ENCODE measurements at regions of chr20 and their contacts with region 1.

Region 1: GRCh38 chr20:34522969-34523871 is 7.0 kb downstream of the DYNLRB1 start:
- DNase-seq: peak; percentile 83
- ATAC-seq: peak; percentile 83
- H3K4me3 ChIP-seq: no peak overlapping the region
- H3K27ac ChIP-seq: peak overlapping the region; percentile 19
- H3K4me1 ChIP-seq: peaks cover 67% of the 10 kb centered on the region
- H3K27me3 ChIP-seq: no peaks in the 10 kb centered on the region
- CTCF ChIP-seq: peak; percentile 99
- EP300 ChIP-seq: no peak
- POLR2A ChIP-seq: no peak
- RAD21 ChIP-seq: peak; percentile 97

Region 2: DNA sequence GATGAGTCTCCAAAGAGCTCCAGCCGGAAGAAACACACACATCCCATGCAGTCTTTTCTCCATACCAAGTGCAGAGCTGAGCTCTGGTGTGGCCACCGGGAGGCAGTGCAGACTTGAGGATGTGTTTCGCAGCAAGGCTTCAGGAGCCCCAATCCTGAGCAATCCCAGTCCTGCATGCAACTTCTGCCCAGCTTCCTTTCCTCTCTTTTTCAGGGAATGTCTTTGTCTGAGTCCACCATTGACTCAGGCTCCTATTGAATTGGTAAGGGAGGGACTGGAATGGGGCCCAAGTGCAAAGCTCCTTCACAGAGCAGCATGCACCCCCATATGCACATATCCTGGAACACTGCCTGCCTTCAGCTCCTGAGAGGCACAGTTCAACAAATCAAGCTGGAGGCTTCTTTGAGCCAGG is 332.5 kb before region 1 on chr20:
- CTCF ChIA-PET with region 1: interaction called, 4 read pairs
- POLR2A ChIA-PET with region 1: no interaction called
- in situ Hi-C with region 1: no loop called
- intact Hi-C with region 1: loop called (anchors 1 kb)
- DNase-seq: peak; percentile 81
- ATAC-seq: peak; percentile 99
- H3K4me3 ChIP-seq: no peak overlapping the region
- H3K27ac ChIP-seq: no peak overlapping the region
- H3K4me1 ChIP-seq: no peaks in the 10 kb centered on the region
- H3K27me3 ChIP-seq: peaks cover 5 to 56% of the 10 kb centered on the region in 2 experiments; a peak in 4 of 5 replicates
- CTCF ChIP-seq: peak; percentile 98
- EP300 ChIP-seq: no peak
- POLR2A ChIP-seq: no peak
- RAD21 ChIP-seq: peak; percentile 95

Region 3: DNA sequence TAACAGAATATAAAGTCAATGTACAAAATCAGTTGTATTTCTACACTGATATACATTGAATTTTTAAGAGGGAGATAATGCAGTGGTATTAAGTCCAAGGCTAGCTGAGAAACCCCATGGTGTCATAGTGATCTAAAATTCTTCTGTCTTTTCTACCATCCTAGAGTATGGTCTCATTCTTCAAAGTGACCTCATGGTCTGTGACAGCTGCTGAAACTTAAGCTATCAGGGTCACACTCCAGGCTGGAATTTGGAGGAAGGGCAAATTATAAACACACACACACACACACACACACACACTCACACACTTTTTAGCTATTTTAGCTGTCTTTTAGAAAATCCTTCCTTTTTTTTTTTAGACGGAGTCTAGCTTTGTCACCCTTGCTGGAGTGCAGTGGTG is 54.3 kb before region 1 on chr20:
- CTCF ChIA-PET with region 1: no interaction called
- POLR2A ChIA-PET with region 1: no interaction called
- in situ Hi-C with region 1: no loop called
- intact Hi-C with region 1: no loop called
- DNase-seq: no peak
- ATAC-seq: no peak
- H3K4me3 ChIP-seq: no peak overlapping the region
- H3K27ac ChIP-seq: no peak overlapping the region
- H3K4me1 ChIP-seq: no peaks in the 10 kb centered on the region
- H3K27me3 ChIP-seq: no peaks in the 10 kb centered on the region
- CTCF ChIP-seq: no peak
- EP300 ChIP-seq: no peak
- POLR2A ChIP-seq: no peak
- RAD21 ChIP-seq: no peak

Region 4: GRCh38 chr20:34549291-34549928 is 26.2 kb after region 1 on chr20:
- CTCF ChIA-PET with region 1: no interaction called
- POLR2A ChIA-PET with region 1: no interaction called
- in situ Hi-C with region 1: no loop called
- intact Hi-C with region 1: loop called (anchors 2 kb)
- DNase-seq: peak; percentile 60
- ATAC-seq: peak; percentile 41
- H3K4me3 ChIP-seq: peak overlapping the region in 1 of 3 experiments; percentile 32; a peak in 1 of 6 replicates
- H3K27ac ChIP-seq: no peak overlapping the region
- H3K4me1 ChIP-seq: peaks cover 27% of the 10 kb centered on the region
- H3K27me3 ChIP-seq: no peaks in the 10 kb centered on the region
- CTCF ChIP-seq: no peak
- EP300 ChIP-seq: no peak
- POLR2A ChIP-seq: no peak
- RAD21 ChIP-seq: no peak